Psoas muscle (tissue), 8 donors: ENCODE measurements at regions of chr4 and their contacts with region 1.

Region 1: GRCh38 chr4:128191115-128191781 is 96.4 kb downstream of the PGRMC2 start:
- DNase-seq: peak; percentile 40 to 66
- ATAC-seq: peak; percentile 85 to 96 (median 89)
- H3K4me3 ChIP-seq: no peak overlapping the region
- H3K27ac ChIP-seq: no peak overlapping the region
- H3K4me1 ChIP-seq: no peaks in the 10 kb centered on the region
- H3K27me3 ChIP-seq: no peaks in the 10 kb centered on the region
- CTCF ChIP-seq: peak; percentile 83

Region 2: GRCh38 chr4:128227991-128228571 is 36.8 kb after region 1 on chr4:
- intact Hi-C with region 1: no loop called
- DNase-seq: no peak
- ATAC-seq: peak in 3 of 4 donors; percentile 54 to 78 (median 65)
- H3K4me3 ChIP-seq: no peak overlapping the region
- H3K27ac ChIP-seq: no peak overlapping the region
- H3K4me1 ChIP-seq: no peaks in the 10 kb centered on the region
- H3K27me3 ChIP-seq: no peaks in the 10 kb centered on the region
- CTCF ChIP-seq: no peak

Region 3: GRCh38 chr4:128942607-128943006 is 751.4 kb after region 1 on chr4:
- intact Hi-C with region 1: loop called in 1 of 2 experiments (anchors 10 kb)
- DNase-seq: no peak
- ATAC-seq: no peak
- H3K4me3 ChIP-seq: no peak overlapping the region
- H3K27ac ChIP-seq: no peak overlapping the region
- H3K4me1 ChIP-seq: no peaks in the 10 kb centered on the region
- H3K27me3 ChIP-seq: no peaks in the 10 kb centered on the region
- CTCF ChIP-seq: no peak